ENCODE measurements at regions of chr16 and their contacts with region 1.

Region 1: GRCh38 chr16:56789360-56789759 is 59.4 kb downstream of the NUP93 start:
- DNase-seq: peak in 3 of 9 donors; percentile 14 to 33 (median 14)
- ATAC-seq: peak; percentile 50
- H3K4me3 ChIP-seq: no peak overlapping the region
- H3K4me3 Mint-ChIP-seq: no peak overlapping the region
- H3K27ac ChIP-seq: no peak overlapping the region
- H3K27ac Mint-ChIP-seq: no peak overlapping the region
- H3K4me1 ChIP-seq: no peaks in the 10 kb centered on the region
- H3K4me1 Mint-ChIP-seq: peaks cover 0 to 10% (median 0%) of the 10 kb centered on the region in 7 donors
- H3K27me3 ChIP-seq: no peaks in the 10 kb centered on the region
- H3K27me3 Mint-ChIP-seq: no peaks in the 10 kb centered on the region

Region 2: GRCh38 chr16:56513972-56514371 is 275.4 kb before region 1 on chr16:
- CTCF ChIA-PET with region 1: no interaction called
- POLR2A ChIA-PET with region 1: no interaction called
- intact Hi-C with region 1: loop called in 1 of 2 experiments (anchors 1 kb)
- DNase-seq: peak in 7 of 9 donors; percentile 37 to 64 (median 56)
- ATAC-seq: peak; percentile 92
- H3K4me3 ChIP-seq: no peak overlapping the region
- H3K4me3 Mint-ChIP-seq: peak overlapping the region in 2 of 10 donors; percentile 3 to 6
- H3K27ac ChIP-seq: no peak overlapping the region
- H3K27ac Mint-ChIP-seq: peak overlapping the region in 1 of 9 donors; percentile 39
- H3K4me1 ChIP-seq: peaks cover 0 to 19% of the 10 kb centered on the region in 2 donors
- H3K4me1 Mint-ChIP-seq: peaks cover 10 to 77% (median 64%) of the 10 kb centered on the region in 7 donors
- H3K27me3 ChIP-seq: no peaks in the 10 kb centered on the region
- H3K27me3 Mint-ChIP-seq: no peaks in the 10 kb centered on the region

Region 3: DNA sequence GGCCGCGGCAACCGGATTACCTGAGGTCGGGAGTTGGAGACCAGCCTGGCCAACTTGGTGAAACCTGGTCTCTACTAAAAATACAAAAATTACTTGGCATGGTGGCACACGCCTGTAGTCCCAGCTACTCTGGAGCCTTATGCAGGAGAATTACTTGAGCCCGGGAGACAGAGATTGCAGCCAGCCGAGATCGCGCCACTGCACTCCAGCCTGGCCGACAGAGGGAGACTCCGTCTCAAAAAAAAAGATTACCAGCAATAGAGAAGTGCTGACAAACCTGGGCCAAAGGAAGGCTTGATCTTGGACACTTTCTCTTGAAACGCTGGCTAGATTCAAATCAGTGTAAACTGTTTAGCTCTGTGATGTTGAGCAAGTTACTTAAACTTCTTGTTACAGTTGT is 115.4 kb before region 1 on chr16:
- CTCF ChIA-PET with region 1: no interaction called
- POLR2A ChIA-PET with region 1: interaction called, 3 read pairs
- intact Hi-C with region 1: loop called in 1 of 2 experiments (anchors 5 kb)
- DNase-seq: peak in 5 of 9 donors; percentile 36 to 68 (median 50)
- ATAC-seq: peak; percentile 63
- H3K4me3 ChIP-seq: no peak overlapping the region
- H3K4me3 Mint-ChIP-seq: peak overlapping the region in 6 of 10 donors; percentile 1 to 65 (median 29)
- H3K27ac ChIP-seq: no peak overlapping the region
- H3K27ac Mint-ChIP-seq: peak overlapping the region in 4 of 9 donors; percentile 43 to 76 (median 50)
- H3K4me1 ChIP-seq: peaks cover 0 to 6% of the 10 kb centered on the region in 2 donors
- H3K4me1 Mint-ChIP-seq: peaks cover 7 to 39% (median 21%) of the 10 kb centered on the region in 7 donors
- H3K27me3 ChIP-seq: peaks cover 0 to 12% of the 10 kb centered on the region in 2 donors
- H3K27me3 Mint-ChIP-seq: peaks cover 27 to 60% (median 37%) of the 10 kb centered on the region in 5 donors

Region 4: DNA sequence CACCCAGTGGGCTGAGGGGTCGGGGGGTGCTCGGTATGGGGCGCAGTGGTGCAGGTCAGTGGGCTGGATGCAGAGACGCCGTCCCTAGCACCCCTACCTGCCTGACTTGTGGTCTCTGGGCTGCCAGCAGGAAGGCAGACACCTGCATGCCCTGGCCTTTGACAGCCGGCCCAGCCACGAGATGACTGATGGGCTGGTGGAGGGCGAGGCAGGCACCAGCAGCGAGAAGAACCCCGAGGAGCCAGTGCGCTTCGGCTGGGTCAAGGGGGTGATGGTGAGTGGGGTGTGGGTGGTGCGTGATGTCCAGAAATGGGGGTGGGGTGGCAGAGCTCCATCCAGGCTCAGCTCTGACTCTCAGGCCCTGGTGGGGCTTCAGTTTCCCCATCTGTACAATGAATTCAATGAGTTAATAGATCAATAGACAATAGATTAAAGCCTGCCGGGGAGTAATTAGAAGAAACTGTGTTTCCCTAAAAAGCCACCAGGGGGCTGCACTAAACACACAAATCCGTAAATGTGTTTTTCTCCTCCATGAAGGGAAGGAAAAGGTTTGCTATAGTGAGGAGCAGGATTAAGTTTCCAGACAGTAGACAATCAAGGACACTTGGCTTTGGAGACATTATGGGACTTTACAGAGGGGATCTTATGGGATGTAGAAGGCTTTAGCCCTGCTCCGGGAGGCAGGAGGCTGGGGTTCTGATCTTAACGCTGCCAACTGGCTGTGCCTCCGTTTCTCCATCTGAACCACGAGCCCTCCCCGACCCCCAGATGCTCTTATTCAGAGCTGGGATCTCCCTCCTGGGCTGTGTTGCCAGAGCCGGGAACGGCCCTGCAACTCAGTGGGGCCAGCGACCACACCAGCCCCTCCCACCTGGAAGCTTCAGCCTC is 77.8 kb after region 1 on chr16:
- CTCF ChIA-PET with region 1: interaction called, 3 read pairs
- POLR2A ChIA-PET with region 1: no interaction called
- intact Hi-C with region 1: loop called (anchors 1 kb)
- DNase-seq: peak in 7 of 9 donors; percentile 45 to 68 (median 56)
- ATAC-seq: peak; percentile 55
- H3K4me3 ChIP-seq: no peak overlapping the region
- H3K4me3 Mint-ChIP-seq: no peak overlapping the region
- H3K27ac ChIP-seq: no peak overlapping the region
- H3K27ac Mint-ChIP-seq: peak overlapping the region in 2 of 9 donors; percentile 70 to 82
- H3K4me1 ChIP-seq: peaks cover 0 to 14% of the 10 kb centered on the region in 2 donors
- H3K4me1 Mint-ChIP-seq: peaks cover 0 to 19% (median 16%) of the 10 kb centered on the region in 7 donors
- H3K27me3 ChIP-seq: no peaks in the 10 kb centered on the region
- H3K27me3 Mint-ChIP-seq: no peaks in the 10 kb centered on the region

Region 5: GRCh38 chr16:56950881-56951771 is 161.8 kb after region 1 on chr16:
- CTCF ChIA-PET with region 1: interaction called, 6 read pairs
- POLR2A ChIA-PET with region 1: no interaction called
- intact Hi-C with region 1: loop called (anchors 1 kb)
- DNase-seq: peak in 7 of 9 donors; percentile 20 to 62 (median 39)
- ATAC-seq: peak; percentile 81
- H3K4me3 ChIP-seq: no peak overlapping the region
- H3K4me3 Mint-ChIP-seq: no peak overlapping the region
- H3K27ac ChIP-seq: no peak overlapping the region
- H3K27ac Mint-ChIP-seq: peak overlapping the region in 5 of 9 donors; percentile 5 to 84 (median 16)
- H3K4me1 ChIP-seq: no peaks in the 10 kb centered on the region
- H3K4me1 Mint-ChIP-seq: peaks cover 0 to 18% (median 7%) of the 10 kb centered on the region in 7 donors
- H3K27me3 ChIP-seq: no peaks in the 10 kb centered on the region
- H3K27me3 Mint-ChIP-seq: no peaks in the 10 kb centered on the region

Measured in naive thymus-derived CD4-positive, alpha-beta T cell (primary cell).